GM10248 (cell line): ENCODE measurements at regions of chr16 and their contacts with region 1.

Region 1: GRCh38 chr16:15055141-15056053 is 477 bp downstream of the NTAN1 start:
- DNase-seq: no peak
- CTCF ChIP-seq: peak; percentile 11

Region 2: DNA sequence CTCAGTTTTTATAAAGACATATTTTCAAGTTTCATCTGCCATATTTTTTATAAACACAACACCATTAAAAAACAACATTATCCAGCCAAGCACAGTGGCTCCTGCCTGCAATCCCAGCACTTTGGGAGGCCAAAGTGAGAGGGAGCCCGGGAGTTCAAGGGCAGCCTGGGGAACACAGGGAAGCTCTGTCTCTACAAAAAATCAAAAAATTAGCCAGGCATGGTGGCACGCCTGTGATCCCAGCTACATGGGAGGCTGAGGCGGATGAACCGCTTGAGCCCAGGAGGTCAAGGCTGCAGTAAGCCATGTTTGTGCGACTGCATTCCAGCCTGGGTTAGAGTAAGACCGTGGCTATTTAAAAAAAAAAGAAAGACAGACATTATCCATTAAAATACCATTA is 17.7 kb after region 1 on chr16:
- CTCF ChIA-PET with region 1: interaction called, 10 read pairs
- POLR2A ChIA-PET with region 1: no interaction called
- DNase-seq: no peak
- CTCF ChIP-seq: no peak

Region 3: GRCh38 chr16:15141586-15141985 is 86.2 kb after region 1 on chr16:
- CTCF ChIA-PET with region 1: no interaction called
- POLR2A ChIA-PET with region 1: no interaction called
- DNase-seq: no peak
- CTCF ChIP-seq: no peak

Region 4: DNA sequence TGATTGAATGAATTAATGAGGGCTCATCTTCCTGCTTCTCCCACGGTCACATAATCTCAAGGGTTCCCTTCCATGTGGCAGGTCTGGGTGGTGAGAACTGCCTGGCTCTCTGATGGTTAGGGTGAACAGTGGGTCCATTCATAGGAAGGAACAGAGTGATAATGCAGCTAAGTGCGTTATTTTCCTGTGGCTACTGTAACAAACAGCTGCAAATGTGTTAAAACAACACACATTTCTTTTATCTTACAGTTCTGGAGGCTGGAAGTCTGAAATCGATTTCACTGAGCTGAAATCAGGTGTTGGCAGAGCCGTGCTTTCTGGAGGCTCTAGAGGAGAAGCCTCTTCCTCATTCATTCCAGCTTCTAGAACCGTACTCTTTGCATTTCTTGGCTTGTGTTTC is 474.3 kb after region 1 on chr16:
- CTCF ChIA-PET with region 1: no interaction called
- POLR2A ChIA-PET with region 1: no interaction called
- DNase-seq: no peak
- CTCF ChIP-seq: no peak

Region 5: DNA sequence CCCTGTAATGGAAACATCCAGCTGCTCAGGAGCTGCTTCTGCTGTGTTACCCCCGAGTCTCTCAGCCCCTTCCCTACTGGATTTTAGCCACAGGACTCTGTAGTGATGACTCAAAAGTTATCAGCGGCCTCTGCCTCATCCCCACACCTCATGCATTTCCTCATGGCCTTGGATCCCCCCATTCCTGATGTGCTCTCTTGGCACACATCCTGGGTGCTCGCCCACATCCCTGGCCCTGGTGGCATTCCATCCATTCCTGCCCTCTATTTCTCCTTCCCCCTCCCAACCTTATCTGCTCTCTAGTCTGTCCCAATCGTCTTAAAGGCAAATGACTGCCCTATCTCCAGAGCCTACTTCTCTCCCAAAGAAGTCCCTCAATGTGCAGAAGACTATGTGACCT is 563.0 kb after region 1 on chr16:
- CTCF ChIA-PET with region 1: no interaction called
- POLR2A ChIA-PET with region 1: no interaction called
- DNase-seq: no peak
- CTCF ChIP-seq: no peak